RWPE1 (cell line): ENCODE measurements at regions of chr6 and their contacts with region 1.

Region 1: DNA sequence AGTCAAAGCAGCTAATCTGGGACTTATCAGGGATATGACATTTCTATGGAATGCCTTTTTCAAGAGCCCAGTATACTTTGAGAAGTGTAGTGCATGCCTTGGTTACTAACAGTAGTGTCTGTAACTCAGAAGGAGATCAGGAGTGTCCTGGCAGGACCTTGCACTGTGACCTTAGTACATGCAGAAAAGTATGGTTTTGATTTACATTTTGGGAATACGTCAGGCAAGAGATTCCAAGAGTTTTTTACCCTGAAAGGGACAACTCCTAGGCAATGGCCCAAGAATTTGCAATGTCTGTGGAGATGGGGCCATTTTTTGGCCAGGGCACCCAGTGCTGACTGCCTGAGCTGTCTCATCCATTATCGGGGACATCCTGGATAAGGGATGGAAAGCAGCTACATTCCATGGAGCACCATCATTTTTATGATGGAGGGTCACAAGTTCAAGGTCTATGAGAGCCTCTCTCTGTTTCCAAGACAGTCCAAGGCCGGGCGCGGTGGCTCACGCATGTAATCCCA is 80.2 kb downstream of the FAM50B start:
- DNase-seq: no peak
- H3K27ac ChIP-seq: no peak overlapping the region
- CTCF ChIP-seq: no peak

Region 2: GRCh38 chr6:3157131-3157927 is 772.0 kb before region 1 on chr6 and contains the start of gene TUBB2A:
- CTCF ChIA-PET with region 1: interaction called, 10 read pairs
- POLR2A ChIA-PET with region 1: no interaction called
- DNase-seq: peak; percentile 95
- H3K27ac ChIP-seq: peak within 1 kb of the TSS; percentile 69
- CTCF ChIP-seq: peak; percentile 81

Region 3: DNA sequence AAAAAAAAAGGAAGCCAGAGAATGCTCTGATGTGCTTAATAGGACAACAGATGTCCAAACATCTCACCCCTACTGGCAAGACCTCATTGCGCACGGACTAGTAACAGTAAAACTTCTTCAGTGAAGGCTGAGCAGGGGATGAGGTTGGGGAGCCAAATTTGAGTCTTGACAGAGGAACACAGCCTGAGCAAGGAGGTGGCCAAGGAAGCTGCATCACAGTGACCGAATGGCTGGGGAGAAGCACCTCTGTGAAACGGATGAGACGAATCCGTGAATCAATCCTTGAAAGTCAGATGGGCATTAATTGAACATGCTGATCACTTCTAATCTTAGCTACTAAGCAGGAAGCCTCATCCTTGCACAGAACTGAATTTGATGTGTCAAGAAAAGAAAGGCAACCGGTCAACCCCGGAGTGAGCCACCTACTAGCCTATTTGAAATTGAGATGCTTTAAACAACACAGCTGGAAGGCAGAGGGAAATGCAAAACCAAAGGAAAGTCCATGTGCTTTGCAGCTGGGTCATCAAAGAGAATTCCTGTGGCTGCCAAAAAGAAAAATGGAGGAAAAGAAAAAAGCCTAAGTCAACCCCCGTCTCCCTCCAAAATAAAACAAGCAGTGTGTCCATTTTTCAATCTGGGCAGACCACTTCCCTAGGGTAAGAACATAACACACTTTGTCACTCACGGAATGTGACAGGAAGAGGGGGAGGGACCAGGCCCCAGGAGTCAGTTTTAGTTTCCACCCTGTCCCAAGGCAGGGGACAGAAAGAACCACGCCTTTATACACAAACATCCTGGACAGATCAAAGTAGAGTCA is 207.3 kb before region 1 on chr6:
- CTCF ChIA-PET with region 1: no interaction called
- POLR2A ChIA-PET with region 1: no interaction called
- DNase-seq: no peak
- H3K27ac ChIP-seq: peak overlapping the region; percentile 21; the same call in 1 of the 2 replicates
- CTCF ChIP-seq: no peak

Region 4: DNA sequence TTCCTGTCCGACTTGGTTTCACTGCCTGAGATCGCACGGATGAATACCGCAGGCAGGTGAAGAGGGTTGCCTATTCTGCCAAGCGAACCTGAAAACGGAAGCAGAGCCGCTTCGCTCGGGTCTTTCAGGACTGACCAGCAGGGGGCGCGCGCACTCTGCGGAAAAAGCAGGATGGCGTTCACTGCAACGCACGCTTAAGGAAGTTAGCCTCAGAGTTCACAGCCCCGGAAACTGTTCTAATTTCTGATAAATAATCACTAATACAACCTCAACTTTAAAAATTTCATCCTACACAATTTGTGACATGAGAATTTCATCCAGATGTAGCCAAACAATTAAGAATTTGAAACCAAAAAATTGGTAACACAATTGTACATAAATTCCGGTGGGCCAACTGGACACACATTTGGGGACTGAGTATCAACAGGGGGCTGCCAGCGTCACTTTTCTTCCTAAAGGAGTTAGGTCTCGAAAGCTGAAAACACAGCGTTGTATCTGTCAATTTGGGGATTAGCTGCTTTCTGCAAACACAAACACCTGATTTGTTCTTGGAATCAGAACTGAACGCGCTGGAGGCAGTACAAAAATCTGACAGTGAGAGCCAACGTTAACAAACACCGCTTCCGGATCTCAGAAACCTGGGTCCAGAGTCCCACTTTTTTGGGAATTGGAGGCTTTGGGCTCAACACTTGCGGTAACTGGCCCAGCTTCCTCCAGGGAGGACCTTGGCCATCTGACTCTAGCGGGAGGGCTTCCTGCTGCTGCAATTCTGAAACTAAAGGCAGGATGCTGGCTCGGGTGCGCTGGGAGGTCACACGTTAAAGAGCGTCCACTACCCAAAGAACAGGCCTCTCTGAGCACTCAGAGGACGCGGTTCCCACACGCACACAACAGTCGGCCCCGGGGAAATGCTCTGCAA is 186.7 kb before region 1 on chr6:
- CTCF ChIA-PET with region 1: interaction called, 11 read pairs
- POLR2A ChIA-PET with region 1: no interaction called
- DNase-seq: peak; percentile 71
- H3K27ac ChIP-seq: peak overlapping the region; percentile 76
- CTCF ChIP-seq: peak; percentile 92

Region 5: DNA sequence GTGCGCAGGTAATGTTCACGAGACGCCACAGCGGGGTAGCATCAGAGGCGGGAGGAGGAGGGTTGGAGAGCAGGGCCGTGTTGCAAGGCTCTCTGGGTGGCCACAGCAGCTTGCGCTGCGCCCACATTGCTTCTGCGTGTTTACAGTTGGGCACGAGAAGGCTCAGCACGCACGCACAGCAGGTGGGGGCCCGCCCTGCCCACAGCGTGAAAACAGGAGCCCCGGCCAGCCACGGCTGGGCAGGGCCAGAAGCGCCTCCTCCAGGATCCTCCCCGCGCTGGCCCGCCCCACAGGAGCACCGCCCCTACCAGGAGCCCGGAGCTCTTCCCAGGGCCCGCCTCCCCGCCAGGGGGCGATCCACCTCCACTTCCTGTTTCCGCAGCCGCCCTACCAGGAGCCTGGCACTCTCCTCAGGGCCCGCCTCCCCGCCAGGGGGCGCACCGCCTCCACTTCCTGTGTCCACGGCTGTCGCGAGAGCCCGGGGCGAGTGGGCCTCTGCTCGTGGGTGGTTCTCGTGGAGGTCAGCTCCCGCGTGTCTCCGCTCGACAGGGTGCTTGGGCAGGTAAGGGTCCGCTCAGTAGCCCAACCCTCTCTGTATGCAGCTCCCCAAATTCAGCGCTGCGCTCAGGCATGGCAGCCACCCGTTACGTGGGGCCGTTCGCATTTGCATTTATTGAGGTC is 80.3 kb before region 1 on chr6 and contains the start of gene FAM50B:
- CTCF ChIA-PET with region 1: interaction called, 36 read pairs
- POLR2A ChIA-PET with region 1: no interaction called
- DNase-seq: peak; percentile 85
- H3K27ac ChIP-seq: peak within 1 kb of the TSS; percentile 70
- CTCF ChIP-seq: peak; percentile 89

Region 6: GRCh38 chr6:3887150-3887700 is 42.1 kb before region 1 on chr6:
- CTCF ChIA-PET with region 1: interaction called, 17 read pairs
- POLR2A ChIA-PET with region 1: no interaction called
- DNase-seq: no peak
- H3K27ac ChIP-seq: no peak overlapping the region
- CTCF ChIP-seq: no peak; the same call in 1 of the 2 replicates

Region 7: GRCh38 chr6:3913077-3913957 is 16.0 kb before region 1 on chr6:
- CTCF ChIA-PET with region 1: interaction called, 10 read pairs
- POLR2A ChIA-PET with region 1: no interaction called
- DNase-seq: peak; percentile 95
- H3K27ac ChIP-seq: no peak overlapping the region; the same call in 1 of the 2 replicates
- CTCF ChIP-seq: no peak